ENCODE measurements at regions of chr6 and their contacts with region 1.

Region 1: GRCh38 chr6:11537229-11538051 is at the start of gene TMEM170B:
- DNase-seq: peak; percentile 93
- H3K4me3 ChIP-seq: peak within 1 kb of the TSS; percentile 54 to 81 (median 77)
- H3K27ac ChIP-seq: peak within 1 kb of the TSS; percentile 31
- H3K4me1 ChIP-seq: peaks cover 25% of the 10 kb centered on the region
- H3K27me3 ChIP-seq: no peaks in the 10 kb centered on the region
- CTCF ChIP-seq: no peak
- POLR2A ChIP-seq: no peak
- total RNA-seq, gene TMEM170B: 4.1 and 4.2 TPM in 2 replicates

Region 2: GRCh38 chr6:10404107-10404798 is 1133.2 kb before region 1 on chr6:
- CTCF ChIA-PET with region 1: no interaction called
- POLR2A ChIA-PET with region 1: no interaction called
- dilution Hi-C with region 1: no loop called
- intact Hi-C with region 1: loop called (anchors 5 kb)
- DNase-seq: peak; percentile 90
- H3K4me3 ChIP-seq: peak overlapping the region; percentile 48 to 80 (median 65)
- H3K27ac ChIP-seq: no peak overlapping the region
- H3K4me1 ChIP-seq: peaks cover 13% of the 10 kb centered on the region
- H3K27me3 ChIP-seq: peaks cover 55 to 78% of the 10 kb centered on the region in 2 experiments
- CTCF ChIP-seq: peak; percentile 9 to 37
- POLR2A ChIP-seq: no peak